ENCODE measurements at regions of chr9 and their contacts with region 1.

Region 1: GRCh38 chr9:90142580-90142979 is 500.0 kb downstream of the DIRAS2 start:
- DNase-seq: peak in 1 of 2 donors; percentile 25
- ATAC-seq: no peak
- H3K4me3 ChIP-seq: no peak overlapping the region
- H3K27ac ChIP-seq: no peak overlapping the region
- H3K4me1 ChIP-seq: no peaks in the 10 kb centered on the region
- H3K27me3 ChIP-seq: peaks cover 0 to 17% (median 0%) of the 10 kb centered on the region in 7 donors
- CTCF ChIP-seq: peak in 8 of 9 donors; percentile 26 to 72 (median 67)

Region 2: GRCh38 chr9:90219548-90220118 is 77.1 kb after region 1 on chr9:
- intact Hi-C with region 1: loop called in 1 of 10 experiments (anchors 5 kb)
- DNase-seq: peak in 1 of 2 donors; percentile 20
- ATAC-seq: no peak
- H3K4me3 ChIP-seq: no peak overlapping the region
- H3K27ac ChIP-seq: no peak overlapping the region
- H3K4me1 ChIP-seq: no peaks in the 10 kb centered on the region
- H3K27me3 ChIP-seq: peaks cover 0 to 24% (median 14%) of the 10 kb centered on the region in 7 donors
- CTCF ChIP-seq: peak in 8 of 9 donors; percentile 18 to 56 (median 41)

Region 3: DNA sequence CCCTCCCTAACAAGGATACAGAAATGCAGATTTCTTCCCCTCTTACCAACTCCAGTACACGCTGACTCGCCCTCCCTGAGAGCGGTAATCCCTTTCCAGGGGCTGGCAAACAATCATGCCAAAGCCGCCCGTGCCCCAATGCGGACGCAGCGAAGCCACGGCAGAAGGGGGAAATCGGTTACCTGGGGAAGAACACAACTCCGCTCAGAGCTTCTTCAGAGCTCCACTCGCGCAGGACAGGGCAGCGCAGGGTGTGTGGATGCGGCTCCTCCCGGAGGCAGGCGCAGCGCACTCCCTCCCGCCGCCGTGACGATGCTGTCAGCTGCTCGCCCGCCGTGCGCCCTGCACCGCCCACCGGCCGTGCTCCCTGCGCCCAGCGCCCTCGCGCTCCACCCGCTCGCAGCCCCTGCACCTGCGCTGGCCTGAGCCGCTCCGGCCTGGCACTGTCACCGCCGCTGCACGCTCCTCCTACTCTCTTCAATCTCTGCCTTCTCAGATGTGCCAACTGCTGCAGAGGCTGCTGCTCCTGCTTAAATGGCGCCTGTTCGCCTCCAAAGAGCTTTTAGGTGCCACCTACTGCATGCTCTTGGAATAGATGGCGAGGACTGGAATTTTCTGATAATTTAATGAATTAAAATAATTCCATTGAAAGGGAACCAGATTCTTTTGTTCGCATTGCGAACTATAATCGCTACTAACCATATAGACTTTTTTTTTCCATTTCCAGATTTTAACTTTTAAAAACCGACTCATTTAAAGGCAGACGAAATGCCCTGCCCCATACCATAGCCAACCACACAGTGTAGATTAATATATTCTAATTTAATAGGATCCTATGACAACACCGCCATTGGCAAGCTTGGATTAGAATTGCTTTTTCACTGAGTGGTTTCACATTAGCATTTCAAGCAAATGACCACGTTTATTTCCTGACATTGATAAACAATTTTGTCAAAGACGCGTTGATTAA is 500.3 kb after region 1 on chr9 and contains the start of gene DIRAS2:
- intact Hi-C with region 1: loop called in 1 of 10 experiments (anchors 10 kb)
- DNase-seq: peak; percentile 16 to 37
- ATAC-seq: peak; percentile 69 to 93 (median 84)
- H3K4me3 ChIP-seq: peak within 1 kb of the TSS in 9 of 10 donors; percentile 22 to 54 (median 47)
- H3K27ac ChIP-seq: no peak within 1 kb of the TSS
- H3K4me1 ChIP-seq: peaks cover 0 to 13% (median 0%) of the 10 kb centered on the region in 9 donors
- H3K27me3 ChIP-seq: peaks cover 0 to 77% (median 50%) of the 10 kb centered on the region in 7 donors
- CTCF ChIP-seq: peak in 7 of 9 donors; percentile 20 to 51 (median 31)
- total RNA-seq, gene DIRAS2: 0.07 to 0.20 (median 0.11) TPM in 4 of 10 donors, not detected in the others

Region 4: DNA sequence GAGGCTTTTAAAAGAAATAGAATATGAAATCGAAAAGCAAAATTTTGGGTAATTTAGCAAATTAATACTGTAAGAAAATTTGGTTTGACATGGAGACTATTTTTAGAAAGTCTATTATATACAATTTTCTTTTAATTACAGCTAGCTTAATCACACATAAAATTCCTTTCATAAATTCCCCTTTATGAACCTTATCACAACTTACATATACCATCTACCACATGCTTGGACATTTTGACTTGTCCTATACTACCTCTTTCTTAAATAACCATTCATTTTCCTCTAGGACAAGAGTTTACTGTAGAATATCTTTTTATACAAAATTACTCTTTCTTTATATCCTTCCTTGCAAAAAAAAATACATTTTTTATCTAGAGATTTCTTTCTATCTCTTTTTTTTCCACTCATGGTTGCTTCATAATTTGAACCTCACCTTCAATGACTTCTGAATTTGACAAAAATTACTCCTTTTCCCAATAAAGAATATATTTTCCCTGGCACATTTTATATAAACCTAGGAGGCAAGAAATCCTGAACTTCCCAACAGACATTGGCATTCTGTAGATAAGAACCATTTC is 625.0 kb after region 1 on chr9:
- intact Hi-C with region 1: loop called in 3 of 10 experiments (anchors 10 kb)
- DNase-seq: no peak
- ATAC-seq: no peak
- H3K4me3 ChIP-seq: no peak overlapping the region
- H3K27ac ChIP-seq: no peak overlapping the region
- H3K4me1 ChIP-seq: peaks cover 0 to 22% (median 0%) of the 10 kb centered on the region in 9 donors
- H3K27me3 ChIP-seq: peaks cover 0 to 3% (median 0%) of the 10 kb centered on the region in 7 donors
- CTCF ChIP-seq: no peak

Region 5: GRCh38 chr9:90773617-90774016 is 631.0 kb after region 1 on chr9:
- intact Hi-C with region 1: loop called in 3 of 10 experiments (anchors 10 kb)
- DNase-seq: no peak
- ATAC-seq: no peak
- H3K4me3 ChIP-seq: no peak overlapping the region
- H3K27ac ChIP-seq: peak overlapping the region in 1 of 10 donors; percentile 13
- H3K4me1 ChIP-seq: peaks cover 0 to 40% (median 0%) of the 10 kb centered on the region in 9 donors
- H3K27me3 ChIP-seq: peaks cover 0 to 7% (median 4%) of the 10 kb centered on the region in 7 donors
- CTCF ChIP-seq: peak in 6 of 9 donors; percentile 25 to 49 (median 40)

Measured in heart right ventricle (tissue), 16 donors.